Activated naive CD4-positive, alpha-beta T cell treated with anti-CD3 and anti-CD28 coated beads for 36 hours (primary cell): ENCODE measurements at regions of chr12 and their contacts with region 1.

Region 1: GRCh38 chr12:133130038-133130807 is at the starts of genes ZNF10 and ZNF891:
- DNase-seq: peak; percentile 97
- H3K4me3 Mint-ChIP-seq: peak within 1 kb of the TSS; percentile 97
- H3K27ac Mint-ChIP-seq: peak within 1 kb of the TSS; percentile 97
- H3K4me1 Mint-ChIP-seq: peaks cover 14% of the 10 kb centered on the region
- H3K27me3 Mint-ChIP-seq: no peaks in the 10 kb centered on the region
- total RNA-seq, gene ZNF10: 4.9 to 6.0 TPM
- total RNA-seq, gene ZNF891: 1.1 to 1.2 TPM

Region 2: GRCh38 chr12:132687208-132688164 is 442.7 kb before region 1 on chr12 and contains the starts of genes POLE and PXMP2:
- CTCF ChIA-PET with region 1: no interaction called
- intact Hi-C with region 1: loop called (anchors 1 kb)
- DNase-seq: peak; percentile 96
- H3K4me3 Mint-ChIP-seq: peak within 1 kb of the TSS; percentile 79
- H3K27ac Mint-ChIP-seq: peak within 1 kb of the TSS; percentile 66
- H3K4me1 Mint-ChIP-seq: peaks cover 23% of the 10 kb centered on the region
- H3K27me3 Mint-ChIP-seq: no peaks in the 10 kb centered on the region
- total RNA-seq, gene POLE: 118 to 121 TPM
- total RNA-seq, gene PXMP2: 11.3 to 12.8 TPM

Region 3: DNA sequence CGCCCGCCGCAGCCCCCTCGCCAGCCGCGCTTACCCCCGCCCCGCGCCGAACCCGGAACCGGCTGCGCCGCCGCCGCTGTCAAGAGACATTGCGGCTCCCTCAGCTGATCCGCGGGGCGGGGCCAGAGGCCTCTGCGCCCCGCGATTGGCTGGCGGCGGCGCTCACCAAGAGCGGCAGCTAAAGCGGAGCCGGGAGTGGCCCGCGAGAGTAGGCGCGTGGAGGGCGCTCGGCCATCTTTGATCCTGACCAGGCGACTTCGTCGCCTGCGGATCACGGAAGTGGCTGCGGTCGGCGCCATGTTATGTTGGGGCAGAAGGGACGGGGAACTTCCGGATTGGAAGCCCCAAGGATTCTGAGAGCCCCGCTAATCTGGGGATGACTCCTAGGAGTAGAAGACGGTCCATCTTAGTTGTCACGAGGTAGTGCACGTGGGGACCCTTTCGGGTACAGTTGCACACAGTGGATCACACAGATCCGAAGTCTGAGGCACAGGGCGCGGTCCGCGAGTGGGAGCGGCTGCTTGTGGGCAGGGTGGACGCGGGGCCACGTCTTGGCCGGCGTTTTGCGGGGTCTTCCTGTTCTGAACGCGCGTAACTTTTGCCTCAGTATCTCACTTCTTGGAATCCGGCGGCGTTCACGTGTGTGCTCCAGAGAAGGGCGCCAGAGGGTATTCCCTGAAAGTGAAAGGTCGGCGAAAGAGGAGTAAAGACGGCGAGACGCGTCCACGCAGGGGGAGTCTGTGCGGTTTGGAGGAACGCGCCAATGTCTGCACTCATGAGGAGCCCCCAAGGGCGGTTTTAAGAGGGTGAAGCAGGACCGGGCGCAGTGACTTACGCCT is 242.5 kb before region 1 on chr12 and contains the start of gene CHFR:
- CTCF ChIA-PET with region 1: no interaction called
- intact Hi-C with region 1: loop called (anchors 1 kb)
- DNase-seq: peak; percentile 97
- H3K4me3 Mint-ChIP-seq: peak within 1 kb of the TSS; percentile 98
- H3K27ac Mint-ChIP-seq: peak within 1 kb of the TSS; percentile 99
- H3K4me1 Mint-ChIP-seq: peaks cover 32% of the 10 kb centered on the region
- H3K27me3 Mint-ChIP-seq: no peaks in the 10 kb centered on the region
- total RNA-seq, gene CHFR: 27.2 to 32.8 TPM

Region 4: DNA sequence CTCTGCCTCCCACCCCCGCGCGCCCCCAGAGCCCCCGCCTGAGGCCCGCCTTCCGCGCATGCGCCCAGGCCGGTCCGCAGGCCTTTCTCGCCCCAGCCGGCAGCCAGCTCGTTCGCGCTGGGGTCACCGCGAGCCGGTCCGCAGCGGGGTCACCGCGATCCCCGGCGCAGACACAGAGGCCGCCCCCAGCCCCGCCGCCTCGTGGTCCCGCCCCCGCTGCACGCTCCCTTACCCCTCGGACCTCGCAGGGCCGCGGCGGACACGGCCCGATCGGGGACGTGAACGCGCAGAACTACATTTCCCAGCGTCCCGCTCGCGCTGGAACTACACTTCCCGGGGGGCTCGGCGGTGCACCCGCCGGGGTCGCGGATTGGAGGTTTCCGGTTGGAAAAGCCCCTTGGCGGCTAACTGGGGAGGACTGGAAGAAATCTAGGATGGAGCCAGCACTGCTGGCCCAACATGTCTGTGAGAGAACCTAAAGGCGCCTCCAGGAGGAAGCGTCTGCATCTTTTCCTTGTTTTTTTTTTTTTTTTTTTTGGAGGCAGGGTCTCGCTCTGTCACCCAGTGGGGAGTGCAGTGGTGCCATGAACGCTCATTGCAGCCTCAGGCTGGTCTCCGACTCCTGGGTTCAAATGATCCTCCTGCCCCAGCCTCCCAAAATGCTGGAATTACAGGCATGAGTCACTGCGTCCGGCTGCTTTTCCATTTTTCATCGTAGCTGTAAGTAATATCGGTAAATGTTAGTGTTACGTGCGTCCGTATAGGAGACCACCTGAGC is 174.0 kb before region 1 on chr12 and contains the start of gene ZNF605:
- CTCF ChIA-PET with region 1: no interaction called
- intact Hi-C with region 1: loop called (anchors 1 kb)
- DNase-seq: peak; percentile 92
- H3K4me3 Mint-ChIP-seq: peak within 1 kb of the TSS; percentile 89
- H3K27ac Mint-ChIP-seq: peak within 1 kb of the TSS; percentile 87
- H3K4me1 Mint-ChIP-seq: peaks cover 20% of the 10 kb centered on the region
- H3K27me3 Mint-ChIP-seq: no peaks in the 10 kb centered on the region
- total RNA-seq, gene ZNF605: 4.3 to 5.3 TPM

Region 5: GRCh38 chr12:132986001-132986912 is 144.0 kb before region 1 on chr12 and contains the start of gene ZNF26:
- CTCF ChIA-PET with region 1: no interaction called
- intact Hi-C with region 1: loop called (anchors 1 kb)
- DNase-seq: peak; percentile 92
- H3K4me3 Mint-ChIP-seq: peak within 1 kb of the TSS; percentile 91
- H3K27ac Mint-ChIP-seq: peak within 1 kb of the TSS; percentile 90
- H3K4me1 Mint-ChIP-seq: peaks cover 24% of the 10 kb centered on the region
- H3K27me3 Mint-ChIP-seq: peaks cover 4% of the 10 kb centered on the region
- total RNA-seq, gene ZNF26: 8.4 to 12.2 TPM

Region 6: GRCh38 chr12:133037207-133038005 is 92.8 kb before region 1 on chr12 and contains the start of gene ZNF84:
- CTCF ChIA-PET with region 1: no interaction called
- intact Hi-C with region 1: loop called (anchors 1 kb)
- DNase-seq: peak; percentile 97
- H3K4me3 Mint-ChIP-seq: peak within 1 kb of the TSS; percentile 97
- H3K27ac Mint-ChIP-seq: peak within 1 kb of the TSS; percentile 97
- H3K4me1 Mint-ChIP-seq: peaks cover 10% of the 10 kb centered on the region
- H3K27me3 Mint-ChIP-seq: no peaks in the 10 kb centered on the region
- total RNA-seq, gene ZNF84: 11.0 to 12.9 TPM

Region 7: GRCh38 chr12:133165776-133166175 is 35.6 kb after region 1 on chr12:
- CTCF ChIA-PET with region 1: no interaction called
- intact Hi-C with region 1: no loop called
- DNase-seq: no peak
- H3K4me3 Mint-ChIP-seq: no peak overlapping the region
- H3K27ac Mint-ChIP-seq: no peak overlapping the region
- H3K4me1 Mint-ChIP-seq: no peaks in the 10 kb centered on the region
- H3K27me3 Mint-ChIP-seq: no peaks in the 10 kb centered on the region

Region 8: GRCh38 chr12:133181238-133181959 is 51.2 kb after region 1 on chr12 and contains the start of gene ZNF268:
- CTCF ChIA-PET with region 1: no interaction called
- intact Hi-C with region 1: loop called (anchors 1 kb)
- DNase-seq: peak; percentile 96
- H3K4me3 Mint-ChIP-seq: peak within 1 kb of the TSS; percentile 94
- H3K27ac Mint-ChIP-seq: peak within 1 kb of the TSS; percentile 79
- H3K4me1 Mint-ChIP-seq: peaks cover 19% of the 10 kb centered on the region
- H3K27me3 Mint-ChIP-seq: no peaks in the 10 kb centered on the region
- total RNA-seq, gene ZNF268: 8.4 to 9.1 TPM